Calu3 (cell line): ENCODE measurements at regions of chr6 and their contacts with region 1.

Region 1: GRCh38 chr6:26216356-26216885 is 129.2 kb downstream of the HFE start:
- DNase-seq: peak; percentile 86
- H3K4me3 Mint-ChIP-seq: no peak overlapping the region
- H3K27ac Mint-ChIP-seq: no peak overlapping the region
- H3K4me1 Mint-ChIP-seq: peaks cover 53% of the 10 kb centered on the region
- H3K27me3 Mint-ChIP-seq: no peaks in the 10 kb centered on the region
- CTCF ChIP-seq: no peak

Region 2: DNA sequence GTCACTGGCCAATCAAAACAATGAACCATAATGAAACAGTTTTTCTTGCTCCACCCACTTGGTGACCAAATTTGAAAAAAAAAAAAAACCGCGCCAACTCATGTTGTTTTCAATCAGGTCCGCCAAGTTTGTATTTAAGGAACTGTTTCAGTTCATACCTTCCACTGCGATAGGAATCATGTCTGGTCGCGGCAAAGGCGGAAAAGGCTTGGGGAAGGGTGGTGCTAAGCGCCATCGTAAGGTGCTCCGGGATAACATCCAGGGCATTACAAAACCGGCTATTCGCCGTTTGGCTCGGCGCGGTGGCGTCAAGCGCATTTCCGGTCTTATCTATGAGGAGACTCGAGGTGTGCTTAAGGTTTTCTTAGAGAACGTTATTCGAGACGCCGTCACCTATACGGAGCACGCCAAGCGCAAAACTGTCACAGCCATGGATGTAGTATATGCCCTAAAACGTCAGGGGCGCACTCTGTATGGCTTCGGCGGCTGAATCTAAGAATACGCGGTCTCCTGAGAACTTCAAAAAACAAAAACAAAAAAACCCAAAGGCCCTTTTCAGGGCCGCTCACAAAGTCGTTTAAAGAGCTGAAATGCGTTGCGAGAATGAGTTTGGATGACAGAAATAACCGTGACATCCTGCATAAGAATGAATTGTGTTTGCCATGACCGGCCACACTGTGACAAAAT is 112.5 kb before region 1 on chr6:
- CTCF ChIA-PET with region 1: no interaction called
- intact Hi-C with region 1: loop called (anchors 5 kb)
- DNase-seq: peak; percentile 91
- H3K4me3 Mint-ChIP-seq: peak overlapping the region; percentile 82
- H3K27ac Mint-ChIP-seq: peak overlapping the region; percentile 99
- H3K4me1 Mint-ChIP-seq: peaks cover 28% of the 10 kb centered on the region
- H3K27me3 Mint-ChIP-seq: no peaks in the 10 kb centered on the region
- CTCF ChIP-seq: peak; percentile 56

Region 3: GRCh38 chr6:26175428-26176181 is 40.8 kb before region 1 on chr6:
- CTCF ChIA-PET with region 1: interaction called, 6 read pairs
- intact Hi-C with region 1: loop called (anchors 5 kb)
- DNase-seq: peak; percentile 72
- H3K4me3 Mint-ChIP-seq: peak overlapping the region; percentile 30
- H3K27ac Mint-ChIP-seq: peak overlapping the region; percentile 79
- H3K4me1 Mint-ChIP-seq: peaks cover 70% of the 10 kb centered on the region
- H3K27me3 Mint-ChIP-seq: no peaks in the 10 kb centered on the region
- CTCF ChIP-seq: peak; percentile 69

Region 4: GRCh38 chr6:26196846-26197648 is 19.4 kb before region 1 on chr6:
- CTCF ChIA-PET with region 1: interaction called, 12 read pairs
- intact Hi-C with region 1: loop called (anchors 1 kb)
- DNase-seq: peak; percentile 84
- H3K4me3 Mint-ChIP-seq: peak overlapping the region; percentile 90
- H3K27ac Mint-ChIP-seq: peak overlapping the region; percentile 93
- H3K4me1 Mint-ChIP-seq: peaks cover 40% of the 10 kb centered on the region
- H3K27me3 Mint-ChIP-seq: no peaks in the 10 kb centered on the region
- CTCF ChIP-seq: no peak

Region 5: GRCh38 chr6:26234421-26235296 is 18.2 kb after region 1 on chr6:
- CTCF ChIA-PET with region 1: interaction called, 15 read pairs
- intact Hi-C with region 1: loop called (anchors 2 kb)
- DNase-seq: peak; percentile 79
- H3K4me3 Mint-ChIP-seq: peak overlapping the region; percentile 66
- H3K27ac Mint-ChIP-seq: peak overlapping the region; percentile 81
- H3K4me1 Mint-ChIP-seq: peaks cover 31% of the 10 kb centered on the region
- H3K27me3 Mint-ChIP-seq: no peaks in the 10 kb centered on the region
- CTCF ChIP-seq: no peak

Region 6: GRCh38 chr6:26270903-26271667 is 54.7 kb after region 1 on chr6:
- CTCF ChIA-PET with region 1: interaction called, 12 read pairs
- intact Hi-C with region 1: loop called (anchors 2 kb)
- DNase-seq: peak; percentile 85
- H3K4me3 Mint-ChIP-seq: no peak overlapping the region
- H3K27ac Mint-ChIP-seq: no peak overlapping the region
- H3K4me1 Mint-ChIP-seq: peaks cover 20% of the 10 kb centered on the region
- H3K27me3 Mint-ChIP-seq: no peaks in the 10 kb centered on the region
- CTCF ChIP-seq: no peak

Region 7: DNA sequence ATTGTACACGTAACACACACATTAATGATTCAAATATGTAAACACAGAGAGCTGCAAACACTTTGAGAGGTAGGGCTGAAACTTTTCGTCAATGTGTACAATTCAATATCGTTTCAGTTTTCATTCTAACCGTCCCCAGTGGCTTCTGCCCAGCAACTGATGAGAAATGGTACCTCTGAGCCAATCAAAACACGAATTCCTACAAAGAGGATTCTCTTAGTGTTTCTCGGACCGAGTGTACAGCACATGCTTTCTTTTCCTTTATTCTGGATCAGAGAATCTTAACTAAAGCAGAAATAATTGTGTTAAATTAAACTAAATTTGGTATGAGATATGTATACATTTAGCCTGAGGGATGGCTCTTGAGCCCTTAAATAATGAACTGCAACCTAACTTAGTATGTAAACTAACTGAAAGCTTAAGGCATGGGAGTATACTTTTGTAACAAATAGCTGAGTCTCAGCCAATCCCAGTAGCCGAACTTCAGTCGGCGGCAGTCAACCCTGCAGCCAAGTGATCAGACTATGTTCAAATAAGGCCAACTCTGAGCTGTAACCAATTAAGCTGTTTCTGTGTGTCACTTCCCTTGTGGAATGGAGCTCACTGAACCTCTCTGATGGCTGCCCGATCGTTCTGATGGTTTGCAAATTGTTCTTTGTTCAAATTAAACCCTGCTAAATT is 257.5 kb after region 1 on chr6:
- CTCF ChIA-PET with region 1: no interaction called
- intact Hi-C with region 1: no loop called
- DNase-seq: peak; percentile 79
- H3K4me3 Mint-ChIP-seq: peak overlapping the region; percentile 73
- H3K27ac Mint-ChIP-seq: peak overlapping the region; percentile 94
- H3K4me1 Mint-ChIP-seq: peaks cover 25% of the 10 kb centered on the region
- H3K27me3 Mint-ChIP-seq: no peaks in the 10 kb centered on the region
- CTCF ChIP-seq: no peak